Activated T-helper 2 cell treated with anti-CD3 and anti-CD28 coated beads, Interferon-gamma antibody, Interleukin-2, Interleukin-4, amounts not matched to agents 10 μg/mL and 5 μg/mL and 100 μg/mL, durations not matched to agents 14 hours and 24 hours and 36 hours (primary cell): ENCODE measurements at regions of chr2 and their contacts with region 1.

Region 1: GRCh38 chr2:157443795-157444640 is at the start of gene CYTIP:
- DNase-seq: peak; percentile 72
- H3K4me3 Mint-ChIP-seq: peak within 1 kb of the TSS; percentile 98
- H3K27ac Mint-ChIP-seq: peak within 1 kb of the TSS; percentile 96
- H3K4me1 Mint-ChIP-seq: peaks cover 47% of the 10 kb centered on the region
- H3K27me3 Mint-ChIP-seq: no peaks in the 10 kb centered on the region
- total RNA-seq, gene CYTIP: 199 and 206 TPM in 2 replicates

Region 2: DNA sequence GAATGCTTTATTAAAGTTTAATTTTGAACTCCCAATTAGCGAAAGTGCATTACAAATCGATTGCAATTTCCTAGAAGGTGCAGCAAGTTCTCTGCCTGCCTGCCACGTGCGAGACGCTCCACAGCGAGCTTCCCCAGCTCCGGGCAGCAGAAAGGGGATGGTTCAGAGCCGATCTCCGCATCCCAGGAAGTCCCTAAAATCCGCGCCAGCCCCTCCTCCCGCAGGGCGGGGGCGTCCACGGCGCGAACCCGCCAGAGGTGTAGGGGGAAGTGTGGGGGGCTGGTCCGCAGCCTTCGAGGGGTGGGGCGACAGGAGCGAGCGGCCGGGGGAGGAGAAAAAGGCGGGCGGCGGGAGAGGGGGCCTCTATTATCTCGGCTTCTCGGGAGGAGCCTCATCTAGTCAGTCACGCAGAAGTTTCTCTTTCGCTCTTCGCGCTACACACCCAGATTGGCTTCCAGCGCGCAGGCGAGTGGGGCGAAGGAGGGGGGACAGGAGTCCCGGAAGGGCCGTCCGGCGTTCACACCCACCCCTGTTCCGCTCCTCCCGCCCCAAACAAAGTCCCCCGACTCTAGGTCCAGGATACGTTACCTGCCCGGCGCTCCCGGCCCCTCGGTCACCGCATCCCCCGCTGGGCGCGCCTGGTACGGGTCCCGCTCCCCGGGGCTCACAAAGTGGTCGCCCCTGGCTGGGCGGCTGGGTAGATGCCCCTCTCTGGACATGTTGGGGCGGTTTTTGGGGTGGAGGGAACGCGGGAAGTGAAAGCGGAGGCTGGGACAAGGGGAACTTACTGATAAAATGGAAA is 1102.4 kb before region 1 on chr2:
- intact Hi-C with region 1: loop called (anchors 5 kb)
- DNase-seq: peak; percentile 88
- H3K4me3 Mint-ChIP-seq: peak overlapping the region; percentile 87
- H3K27ac Mint-ChIP-seq: peak overlapping the region; percentile 94
- H3K4me1 Mint-ChIP-seq: peaks cover 48% of the 10 kb centered on the region
- H3K27me3 Mint-ChIP-seq: no peaks in the 10 kb centered on the region

Region 3: GRCh38 chr2:157404363-157404762 is 39.7 kb before region 1 on chr2:
- intact Hi-C with region 1: loop called (anchors 5 kb)
- DNase-seq: peak; percentile 61
- H3K4me3 Mint-ChIP-seq: no peak overlapping the region
- H3K27ac Mint-ChIP-seq: peak overlapping the region; percentile 44
- H3K4me1 Mint-ChIP-seq: peaks cover 55% of the 10 kb centered on the region
- H3K27me3 Mint-ChIP-seq: no peaks in the 10 kb centered on the region

Region 4: DNA sequence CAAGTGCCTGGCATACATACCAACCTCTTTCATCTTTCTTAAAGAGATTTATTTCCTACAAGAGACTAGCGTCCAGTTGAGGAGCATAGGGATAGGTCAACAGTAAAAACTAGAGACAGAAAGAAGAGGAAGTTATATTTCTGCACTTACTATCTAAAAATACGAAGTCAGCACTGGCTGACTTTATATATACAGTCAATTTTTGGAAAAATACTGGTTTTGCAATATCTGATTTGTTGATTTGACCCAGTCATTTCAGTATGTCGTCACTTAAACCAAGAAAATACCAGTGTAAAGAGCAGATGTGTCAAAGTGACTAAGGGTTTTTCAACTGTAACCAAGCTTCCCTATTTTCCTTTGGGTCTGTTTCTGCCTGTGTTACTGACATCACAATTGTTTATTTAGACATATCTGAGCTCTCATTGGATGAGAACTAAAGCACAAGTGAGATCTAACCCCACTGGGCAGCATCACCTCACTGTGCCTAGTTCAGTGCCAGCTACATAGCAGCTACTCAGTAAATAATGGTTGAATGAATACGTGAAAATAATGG is 23.2 kb before region 1 on chr2:
- intact Hi-C with region 1: loop called (anchors 1 kb)
- DNase-seq: no peak
- H3K4me3 Mint-ChIP-seq: peak overlapping the region; percentile 56
- H3K27ac Mint-ChIP-seq: peak overlapping the region; percentile 95
- H3K4me1 Mint-ChIP-seq: peaks cover 67% of the 10 kb centered on the region
- H3K27me3 Mint-ChIP-seq: no peaks in the 10 kb centered on the region

Region 5: DNA sequence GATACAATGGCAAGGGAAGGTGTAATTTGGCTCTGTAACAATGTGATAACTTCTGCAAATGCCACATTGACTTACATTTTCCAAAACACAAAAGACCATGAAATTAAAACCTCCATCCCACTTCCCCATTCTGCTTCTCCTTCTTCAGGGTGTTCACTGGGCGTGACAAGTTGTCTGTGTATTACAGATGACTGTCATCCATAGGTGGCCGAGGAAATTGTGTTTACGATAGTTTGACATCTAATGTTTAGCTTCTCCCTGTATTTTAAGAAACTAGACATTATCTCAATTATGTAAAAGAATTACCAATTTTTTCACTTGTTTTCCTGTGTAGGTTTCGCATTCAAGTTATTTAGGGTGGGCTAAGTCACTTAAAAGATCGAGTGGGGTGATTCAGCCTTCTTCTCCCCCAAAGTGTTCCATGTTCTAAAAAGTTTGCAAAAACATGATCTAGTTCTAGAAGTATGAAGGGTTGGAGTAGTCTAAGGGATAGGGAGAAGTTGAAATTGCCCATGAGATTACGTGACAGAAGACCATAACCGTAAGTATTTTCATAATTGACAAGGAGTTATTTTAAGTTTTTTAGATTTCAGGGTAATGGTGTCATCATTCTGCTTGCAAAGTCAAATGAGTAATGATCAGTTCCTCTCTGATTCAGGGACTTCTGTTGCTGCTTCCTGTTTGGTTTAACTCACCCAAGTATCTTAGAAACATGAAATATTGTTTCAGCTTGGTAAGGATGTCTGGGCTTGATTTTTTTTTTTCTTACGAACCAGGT is 25.1 kb after region 1 on chr2:
- intact Hi-C with region 1: loop called (anchors 1 kb)
- DNase-seq: no peak
- H3K4me3 Mint-ChIP-seq: peak overlapping the region; percentile 69
- H3K27ac Mint-ChIP-seq: peak overlapping the region; percentile 96
- H3K4me1 Mint-ChIP-seq: peaks cover 86% of the 10 kb centered on the region
- H3K27me3 Mint-ChIP-seq: no peaks in the 10 kb centered on the region